Esophagus squamous epithelium (tissue), 5 donors: ENCODE measurements at regions of chr6 and their contacts with region 1.

Region 1: DNA sequence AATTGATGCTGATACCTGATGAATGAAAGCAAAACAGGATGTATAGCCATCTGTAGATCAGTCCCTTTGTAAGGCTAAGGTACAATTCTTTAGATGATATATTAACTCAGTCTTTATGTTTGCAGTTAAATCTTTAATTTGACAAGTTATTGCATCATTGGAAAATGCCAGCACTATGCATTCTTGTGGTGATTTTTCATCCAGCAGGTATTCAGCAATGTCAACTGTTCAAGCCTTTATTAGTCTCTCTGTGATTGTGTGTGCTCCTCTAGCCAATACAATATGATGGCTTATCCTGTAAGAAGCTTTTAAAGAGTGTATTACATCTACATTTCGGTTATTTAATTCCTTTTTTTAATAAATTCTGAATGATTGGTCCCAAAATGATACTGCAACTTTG is 34.3 kb downstream of the HLA-DMB start:
- DNase-seq: no peak
- H3K4me3 ChIP-seq: no peak overlapping the region
- H3K27ac ChIP-seq: no peak overlapping the region
- H3K4me1 ChIP-seq: no peaks in the 10 kb centered on the region
- H3K27me3 ChIP-seq: peaks cover 0 to 18% (median 0%) of the 10 kb centered on the region in 4 donors
- CTCF ChIP-seq: no peak
- POLR2A ChIP-seq: no peak

Region 2: GRCh38 chr6:32894080-32895005 is 12.2 kb before region 1 on chr6:
- intact Hi-C with region 1: loop called (anchors 2 kb)
- DNase-seq: peak; percentile 51
- H3K4me3 ChIP-seq: peak overlapping the region; percentile 64 to 84 (median 80)
- H3K27ac ChIP-seq: peak overlapping the region; percentile 90 to 96 (median 93)
- H3K4me1 ChIP-seq: peaks cover 7 to 24% (median 12%) of the 10 kb centered on the region in 3 donors
- H3K27me3 ChIP-seq: no peaks in the 10 kb centered on the region
- CTCF ChIP-seq: no peak
- POLR2A ChIP-seq: peak in 2 of 4 donors; percentile 53 to 79